ENCODE measurements at regions of chr3 and their contacts with region 1.

Region 1: DNA sequence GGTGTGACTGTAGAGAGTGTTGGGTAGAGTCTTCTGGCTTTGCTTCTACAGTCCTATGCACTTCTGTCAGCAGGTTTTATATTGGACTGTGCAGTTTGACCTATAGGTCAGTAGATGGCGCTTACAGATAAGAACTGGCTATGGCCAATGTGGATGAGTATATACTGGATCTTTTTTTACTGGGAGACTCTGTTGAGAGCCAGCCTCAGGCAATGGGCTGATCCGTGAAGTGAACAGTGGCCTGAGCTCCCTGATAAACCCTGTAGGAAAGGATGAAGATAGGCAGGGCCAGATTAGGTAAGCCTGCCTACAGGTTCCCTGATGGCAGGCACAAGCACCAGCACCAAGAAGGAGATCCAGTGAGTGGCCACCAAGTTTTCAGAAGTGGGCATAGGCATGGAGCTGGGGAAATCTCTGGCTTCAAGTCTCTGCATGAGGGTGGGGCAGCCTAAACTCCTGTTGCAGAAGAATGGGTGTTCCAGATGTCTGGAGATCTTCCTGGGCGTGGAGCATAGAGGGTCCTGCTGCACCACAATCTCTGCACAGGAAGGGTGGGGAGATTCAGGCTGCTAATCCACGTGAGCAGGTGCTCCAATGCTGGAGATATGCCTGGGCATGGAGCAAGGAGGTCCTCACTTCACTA is 326.0 kb upstream of the SGO1 start:
- DNase-seq: peak; percentile 26
- H3K4me3 ChIP-seq: no peak overlapping the region
- H3K27me3 ChIP-seq: no peaks in the 10 kb centered on the region
- CTCF ChIP-seq: peak; percentile 63

Region 2: DNA sequence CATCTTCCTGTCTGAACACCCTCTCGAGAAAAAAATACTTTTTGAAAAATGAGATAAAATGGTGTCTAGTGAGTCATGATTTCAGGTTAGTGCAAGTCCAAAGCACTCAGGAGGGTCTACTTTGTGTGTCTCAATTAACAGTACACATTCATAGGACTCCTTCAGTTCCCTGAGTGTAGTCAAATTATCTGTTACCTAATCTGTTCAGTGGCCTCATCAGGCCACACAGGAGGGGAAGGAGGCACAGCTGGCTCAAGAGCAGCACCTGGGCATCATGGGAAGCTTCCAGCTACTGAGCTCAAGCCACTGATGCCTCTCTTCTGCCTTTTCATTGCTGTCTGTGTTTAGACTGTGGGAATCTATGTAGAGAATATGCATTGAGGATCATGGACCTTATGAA is 15.4 kb after region 1 on chr3:
- CTCF ChIA-PET with region 1: interaction called, 10 read pairs
- POLR2A ChIA-PET with region 1: no interaction called
- DNase-seq: no peak
- H3K4me3 ChIP-seq: no peak overlapping the region
- H3K27me3 ChIP-seq: no peaks in the 10 kb centered on the region
- CTCF ChIP-seq: no peak

Region 3: GRCh38 chr3:20574746-20575145 is 62.8 kb after region 1 on chr3:
- CTCF ChIA-PET with region 1: no interaction called
- POLR2A ChIA-PET with region 1: no interaction called
- DNase-seq: peak; percentile 89
- H3K4me3 ChIP-seq: no peak overlapping the region
- H3K27me3 ChIP-seq: no peaks in the 10 kb centered on the region
- CTCF ChIP-seq: no peak

Region 4: GRCh38 chr3:21484057-21484827 is 972.3 kb after region 1 on chr3:
- CTCF ChIA-PET with region 1: interaction called, 29 read pairs
- POLR2A ChIA-PET with region 1: no interaction called
- DNase-seq: no peak
- H3K4me3 ChIP-seq: no peak overlapping the region
- H3K27me3 ChIP-seq: no peaks in the 10 kb centered on the region
- CTCF ChIP-seq: peak; percentile 84